OCI-LY7 (cell line): ENCODE measurements at regions of chr1 and their contacts with region 1.

Region 1: DNA sequence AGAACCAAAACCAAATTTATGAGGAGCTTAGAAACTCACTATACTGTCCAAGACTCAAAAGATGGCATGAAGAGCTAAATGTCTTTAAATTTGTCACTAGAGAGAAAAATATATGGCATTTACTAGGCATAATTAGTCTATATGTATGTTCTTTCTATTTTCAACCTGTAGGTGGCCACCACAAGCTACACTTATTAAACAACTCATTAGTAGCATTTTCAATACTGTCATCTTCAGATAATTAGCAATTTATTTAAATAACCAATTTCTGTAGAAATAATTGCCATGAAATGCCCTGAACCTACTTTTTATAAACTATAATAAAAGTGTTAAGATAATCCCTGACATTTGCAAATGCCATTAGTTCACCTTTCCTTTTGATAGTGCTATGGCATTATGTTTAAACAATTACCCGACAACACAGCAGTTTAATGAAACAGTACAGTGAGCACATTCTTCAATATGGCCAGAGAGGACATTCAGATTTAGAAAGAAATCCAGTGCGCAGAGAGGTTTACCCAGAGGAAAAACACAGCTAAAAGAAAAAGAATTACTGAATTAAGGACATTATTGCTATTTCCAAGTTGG is 522.5 kb downstream of the PTBP2 start:
- DNase-seq: peak; percentile 21
- H3K4me3 ChIP-seq: no peak overlapping the region
- H3K27ac ChIP-seq: no peak overlapping the region
- H3K4me1 ChIP-seq: no peaks in the 10 kb centered on the region
- CTCF ChIP-seq: peak; percentile 77

Region 2: DNA sequence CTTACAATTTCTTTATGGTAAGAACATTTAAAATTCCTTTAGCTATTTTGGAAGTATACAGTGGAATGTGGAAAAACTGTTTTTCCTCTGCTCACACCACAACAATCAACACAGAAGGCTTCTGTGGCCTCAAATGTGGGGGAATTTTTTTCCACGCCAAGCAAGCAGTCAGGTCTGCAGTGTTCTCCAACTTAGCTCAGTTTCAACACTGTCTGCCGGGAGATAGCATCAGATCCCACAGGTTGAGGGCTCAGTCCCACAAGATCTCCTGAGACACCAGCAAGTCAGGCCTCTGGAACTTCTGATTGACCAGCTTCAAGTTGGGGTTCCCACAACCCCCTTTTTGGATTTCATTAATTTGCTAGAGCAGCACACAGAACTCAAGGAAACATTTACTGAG is 472.2 kb before region 1 on chr1:
- CTCF ChIA-PET with region 1: no interaction called
- POLR2A ChIA-PET with region 1: no interaction called
- intact Hi-C with region 1: no loop called
- DNase-seq: no peak
- H3K4me3 ChIP-seq: no peak overlapping the region
- H3K27ac ChIP-seq: no peak overlapping the region
- H3K4me1 ChIP-seq: no peaks in the 10 kb centered on the region
- CTCF ChIP-seq: no peak

Region 3: GRCh38 chr1:97538113-97538512 is 294.0 kb after region 1 on chr1:
- CTCF ChIA-PET with region 1: no interaction called
- POLR2A ChIA-PET with region 1: no interaction called
- intact Hi-C with region 1: loop called (anchors 10 kb)
- DNase-seq: no peak
- H3K4me3 ChIP-seq: no peak overlapping the region
- H3K27ac ChIP-seq: no peak overlapping the region
- H3K4me1 ChIP-seq: no peaks in the 10 kb centered on the region
- CTCF ChIP-seq: no peak

Region 4: DNA sequence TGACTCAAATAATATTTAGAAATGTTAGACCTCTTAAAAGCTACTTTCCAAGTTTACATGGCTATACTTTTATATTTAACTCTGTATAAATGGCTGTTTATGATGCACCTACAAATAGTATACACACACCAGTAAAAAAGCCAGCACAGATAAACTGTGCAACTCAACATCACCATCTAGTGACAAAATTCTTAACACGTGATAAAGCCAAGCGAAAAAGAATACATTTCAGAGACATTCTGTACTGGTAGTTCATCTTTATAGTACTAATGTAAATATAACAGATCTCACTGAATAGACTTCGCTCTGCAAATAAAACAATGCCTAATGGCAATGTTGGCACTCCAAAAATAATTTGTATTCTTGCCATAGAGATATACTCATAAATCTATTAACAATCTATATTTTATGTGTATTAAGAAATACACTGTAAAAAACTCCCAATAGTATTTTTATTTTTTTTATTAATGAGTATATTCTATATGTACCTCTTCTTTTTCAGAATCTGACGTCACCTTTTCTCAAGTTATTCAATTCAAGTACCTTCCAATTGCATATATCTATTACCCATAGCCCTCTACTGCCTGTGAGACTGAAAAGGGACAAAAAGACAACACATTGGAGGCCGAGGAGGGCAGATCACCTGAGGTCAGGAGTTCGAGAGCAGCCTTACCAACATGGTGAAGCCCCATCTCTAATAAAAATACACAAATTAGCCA is 576.6 kb after region 1 on chr1:
- CTCF ChIA-PET with region 1: no interaction called
- POLR2A ChIA-PET with region 1: no interaction called
- intact Hi-C with region 1: loop called (anchors 5 kb)
- DNase-seq: peak; percentile 37
- H3K4me3 ChIP-seq: no peak overlapping the region
- H3K27ac ChIP-seq: no peak overlapping the region
- H3K4me1 ChIP-seq: no peaks in the 10 kb centered on the region
- CTCF ChIP-seq: peak; percentile 76